T-cell (primary cell): ENCODE measurements at regions of chr6 and their contacts with region 1.

Region 1: DNA sequence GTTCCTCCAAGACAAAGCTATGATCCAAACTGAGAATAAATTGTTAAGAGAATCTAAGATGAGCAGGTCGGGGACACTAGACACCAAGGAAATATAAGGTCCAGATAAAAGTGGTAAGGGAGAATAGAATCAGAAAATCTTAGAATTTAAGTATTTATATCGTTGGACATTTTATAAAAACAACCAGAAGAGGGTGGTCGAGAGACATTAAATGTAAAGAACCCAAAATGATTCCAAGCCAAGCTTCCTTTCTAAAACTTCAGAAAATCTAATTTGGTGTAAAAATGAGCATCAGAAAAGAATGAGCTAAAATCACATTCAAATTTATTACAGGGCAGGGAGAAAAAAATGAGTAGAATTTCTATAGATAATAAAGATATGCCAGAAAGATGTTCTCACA is 97.8 kb upstream of the OGFRL1 start:
- DNase-seq: peak in 1 of 35 experiments; percentile 48
- ATAC-seq: no peak
- H3K4me3 ChIP-seq: no peak overlapping the region
- H3K4me3 Mint-ChIP-seq: no peak overlapping the region
- H3K27ac ChIP-seq: no peak overlapping the region
- H3K27ac Mint-ChIP-seq: no peak overlapping the region
- H3K4me1 ChIP-seq: no peaks in the 10 kb centered on the region
- H3K4me1 Mint-ChIP-seq: no peaks in the 10 kb centered on the region
- H3K27me3 ChIP-seq: no peaks in the 10 kb centered on the region
- H3K27me3 Mint-ChIP-seq: peaks cover 5 to 12% of the 10 kb centered on the region in 2 donors

Region 2: DNA sequence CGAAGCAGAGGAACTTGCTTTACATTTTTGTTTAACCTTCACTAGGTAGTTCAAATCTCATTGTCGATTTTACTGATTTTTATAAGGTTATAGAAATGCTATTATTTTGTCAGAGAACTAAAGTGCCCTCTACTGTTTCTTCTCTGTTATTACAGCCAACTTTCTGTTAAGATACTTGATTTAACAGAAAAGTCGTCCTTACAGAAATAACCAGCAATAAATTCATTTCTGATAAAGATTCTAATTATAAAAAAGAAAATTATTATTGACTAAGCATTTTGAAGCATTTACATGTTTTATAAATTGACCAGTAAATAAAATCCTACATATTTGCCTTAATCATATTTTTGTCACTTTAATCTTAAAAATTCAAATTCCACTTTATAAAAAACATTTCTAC is 158.6 kb after region 1 on chr6:
- CTCF ChIA-PET with region 1: interaction called, 12 to 13 read pairs
- POLR2A ChIA-PET with region 1: no interaction called
- DNase-seq: peak in 1 of 35 experiments; percentile 45
- ATAC-seq: no peak
- H3K4me3 ChIP-seq: no peak overlapping the region
- H3K4me3 Mint-ChIP-seq: no peak overlapping the region
- H3K27ac ChIP-seq: no peak overlapping the region
- H3K27ac Mint-ChIP-seq: no peak overlapping the region
- H3K4me1 ChIP-seq: no peaks in the 10 kb centered on the region
- H3K4me1 Mint-ChIP-seq: no peaks in the 10 kb centered on the region
- H3K27me3 ChIP-seq: no peaks in the 10 kb centered on the region
- H3K27me3 Mint-ChIP-seq: peaks cover 0 to 4% of the 10 kb centered on the region in 2 donors